BJ (cell line): ENCODE measurements at regions of chr13 and their contacts with region 1.

Region 1: GRCh38 chr13:86681223-86681622 is 882.0 kb upstream of the SLITRK6 start:
- DNase-seq: no peak
- H3K4me3 ChIP-seq: no peak overlapping the region
- H3K27me3 ChIP-seq: no peaks in the 10 kb centered on the region
- CTCF ChIP-seq: no peak

Region 2: DNA sequence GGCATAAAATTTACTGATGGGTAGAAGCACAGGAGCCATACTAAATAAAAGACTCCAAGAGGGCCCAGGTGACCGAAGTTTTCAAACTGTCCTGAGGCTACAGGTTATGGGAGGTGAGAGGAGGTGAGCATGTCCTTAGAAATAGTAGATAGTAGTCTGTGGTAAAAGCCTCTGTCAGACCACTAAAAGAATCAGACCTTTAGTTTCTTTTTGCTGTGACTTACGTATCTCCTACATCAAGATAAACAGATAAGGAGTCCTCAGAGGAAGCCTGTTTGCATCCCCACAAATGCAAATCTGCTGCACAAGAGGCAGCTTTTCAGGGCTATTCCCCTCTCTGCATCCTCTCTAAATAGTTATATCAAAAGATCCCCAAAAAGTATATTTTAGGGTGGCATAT is 170.4 kb before region 1 on chr13:
- CTCF ChIA-PET with region 1: no interaction called
- POLR2A ChIA-PET with region 1: no interaction called
- DNase-seq: no peak
- H3K4me3 ChIP-seq: no peak overlapping the region
- H3K27me3 ChIP-seq: no peaks in the 10 kb centered on the region
- CTCF ChIP-seq: no peak

Region 3: GRCh38 chr13:86692291-86692690 is 11.1 kb after region 1 on chr13:
- CTCF ChIA-PET with region 1: no interaction called
- POLR2A ChIA-PET with region 1: no interaction called
- DNase-seq: no peak
- H3K4me3 ChIP-seq: no peak overlapping the region
- H3K27me3 ChIP-seq: no peaks in the 10 kb centered on the region
- CTCF ChIP-seq: no peak

Region 4: DNA sequence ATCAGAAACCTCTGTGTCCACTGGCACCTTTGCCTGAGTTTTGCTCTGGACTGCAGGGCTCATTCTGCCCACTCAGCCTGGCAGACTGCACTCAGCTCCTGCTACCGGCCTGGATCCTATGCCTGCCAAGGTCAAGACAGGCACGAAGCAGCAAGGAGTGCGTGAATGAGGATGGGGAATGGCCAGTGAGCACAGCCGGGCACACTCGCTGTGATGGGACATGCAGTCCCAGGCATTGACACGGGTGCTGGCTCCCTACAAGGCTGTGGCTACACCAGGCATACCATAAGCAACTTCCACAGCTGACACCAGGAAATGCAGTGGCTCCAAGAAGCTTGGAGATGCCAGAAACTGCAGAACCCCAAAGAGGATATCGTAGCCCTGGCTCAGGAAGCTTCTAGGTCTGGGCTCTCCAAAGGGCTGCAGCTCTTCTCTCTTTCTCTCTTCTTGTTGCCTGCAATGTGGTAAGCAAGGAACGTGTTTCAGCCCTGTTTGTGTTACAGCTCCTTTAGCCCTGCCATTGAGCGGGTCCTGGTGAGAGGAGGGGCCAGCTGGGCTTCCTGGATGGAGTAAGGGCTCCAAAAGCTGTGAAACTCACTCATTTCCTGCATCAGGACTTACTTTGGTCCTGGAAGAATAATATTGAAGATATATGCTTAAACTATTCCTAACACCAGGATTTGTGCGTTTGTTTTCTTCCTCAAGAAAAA is 157.3 kb after region 1 on chr13:
- CTCF ChIA-PET with region 1: no interaction called
- POLR2A ChIA-PET with region 1: no interaction called
- DNase-seq: no peak
- H3K4me3 ChIP-seq: no peak overlapping the region
- H3K27me3 ChIP-seq: no peaks in the 10 kb centered on the region
- CTCF ChIP-seq: no peak

Region 5: GRCh38 chr13:86856991-86857390 is 175.8 kb after region 1 on chr13:
- CTCF ChIA-PET with region 1: no interaction called
- POLR2A ChIA-PET with region 1: no interaction called
- DNase-seq: no peak
- H3K4me3 ChIP-seq: no peak overlapping the region
- H3K27me3 ChIP-seq: no peaks in the 10 kb centered on the region
- CTCF ChIP-seq: no peak

Region 6: DNA sequence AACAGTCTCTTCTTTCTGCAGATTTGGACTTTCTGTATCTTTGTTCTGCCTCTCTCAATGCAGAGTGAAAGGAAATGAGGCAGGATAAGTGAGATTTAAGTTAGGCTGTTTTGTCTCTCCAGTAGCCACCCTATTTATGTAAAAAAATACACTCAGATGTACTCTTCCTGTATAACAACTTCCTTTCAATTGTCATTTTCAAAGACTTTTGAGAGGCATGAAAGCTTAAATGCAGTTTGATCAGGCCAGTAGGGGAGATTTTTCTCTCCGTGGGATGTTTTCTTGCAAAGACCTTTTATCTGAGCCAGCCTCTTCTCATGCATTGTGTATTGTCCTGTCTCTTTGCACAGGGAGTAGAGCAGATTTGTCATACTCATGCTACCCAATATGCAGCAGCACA is 1156.7 kb after region 1 on chr13:
- CTCF ChIA-PET with region 1: no interaction called
- POLR2A ChIA-PET with region 1: interaction called, 12 read pairs
- DNase-seq: no peak
- H3K4me3 ChIP-seq: no peak overlapping the region
- H3K27me3 ChIP-seq: no peaks in the 10 kb centered on the region
- CTCF ChIP-seq: no peak